ENCODE measurements at regions of chr11 and their contacts with region 1.

Region 1: DNA sequence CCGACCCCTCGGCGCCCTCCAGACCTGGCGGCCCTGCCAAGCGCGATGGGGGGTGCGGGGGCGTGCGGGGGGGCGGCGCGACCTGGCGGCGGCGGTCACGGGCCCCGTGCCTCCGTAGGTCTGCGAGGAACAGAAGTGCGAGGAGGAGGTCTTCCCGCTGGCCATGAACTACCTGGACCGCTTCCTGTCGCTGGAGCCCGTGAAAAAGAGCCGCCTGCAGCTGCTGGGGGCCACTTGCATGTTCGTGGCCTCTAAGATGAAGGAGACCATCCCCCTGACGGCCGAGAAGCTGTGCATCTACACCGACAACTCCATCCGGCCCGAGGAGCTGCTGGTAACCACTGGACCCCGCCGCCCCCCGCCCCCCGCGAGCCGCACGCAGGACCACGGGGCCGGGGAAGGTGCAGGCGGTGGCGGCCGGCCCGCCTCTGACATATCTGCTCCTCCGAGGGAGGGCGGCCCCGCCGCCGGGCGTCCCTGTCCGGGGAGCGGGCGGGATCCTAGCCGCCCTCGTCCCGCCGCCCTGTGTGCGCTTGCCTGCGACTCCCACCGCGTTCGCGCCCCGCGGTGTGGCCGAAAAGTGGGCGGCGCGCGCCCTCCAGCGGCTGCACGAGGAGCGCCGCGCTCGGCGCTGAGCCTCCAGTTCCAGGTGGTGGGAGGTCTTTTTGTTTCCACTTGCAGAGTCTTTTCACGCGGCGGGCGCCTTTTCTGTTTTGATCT is 2.1 kb downstream of the CCND1 start:
- DNase-seq: peak in 9 of 10 donors; percentile 40 to 86 (median 68)
- H3K4me3 ChIP-seq: peak overlapping the region; percentile 31 to 79 (median 66)
- H3K27ac ChIP-seq: peak overlapping the region in 35 of 59 donors; percentile 3 to 82 (median 63)
- H3K27me3 ChIP-seq: peaks cover 2 to 80% (median 49%) of the 10 kb centered on the region in 45 donors
- CTCF ChIP-seq: peak; percentile 54 to 99 (median 95)

Region 2: DNA sequence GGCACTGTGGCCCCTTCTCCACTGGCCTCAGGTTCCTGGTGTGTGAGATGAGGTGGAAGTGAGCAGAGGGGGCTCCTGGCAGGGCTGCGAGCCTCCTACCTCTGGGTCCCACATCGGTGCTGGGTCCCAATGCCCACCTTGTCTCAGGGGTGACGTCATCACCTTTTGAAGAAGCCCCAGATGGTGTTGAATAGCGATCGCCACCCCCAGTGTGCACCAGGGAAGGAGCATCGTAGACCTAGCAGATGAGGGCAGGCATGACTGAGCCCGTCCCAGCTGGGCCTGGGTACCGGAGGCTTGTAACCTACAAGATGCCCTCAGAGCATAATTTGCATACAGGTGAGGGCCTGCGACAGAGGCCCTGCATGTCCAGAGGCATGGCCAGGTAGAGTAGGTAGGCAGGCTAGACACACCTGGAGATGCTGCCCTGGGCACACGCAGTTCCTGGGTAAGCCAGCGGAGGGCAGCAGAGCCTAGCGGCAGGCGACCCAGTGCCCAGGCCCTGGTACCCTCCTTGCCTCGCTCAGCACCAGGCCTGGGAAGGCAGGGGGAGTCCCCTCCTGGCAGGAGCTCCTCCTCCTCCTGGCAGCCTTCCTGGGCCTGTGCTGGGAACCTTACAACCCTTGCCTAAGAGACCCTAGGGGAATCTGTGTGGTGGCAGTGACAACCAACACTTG is 541.8 kb before region 1 on chr11:
- intact Hi-C with region 1: loop called (anchors 1 kb)
- DNase-seq: peak; percentile 54 to 80 (median 64)
- H3K4me3 ChIP-seq: no peak overlapping the region
- H3K27ac ChIP-seq: no peak overlapping the region
- H3K27me3 ChIP-seq: peaks cover 0 to 21% (median 0%) of the 10 kb centered on the region in 45 donors
- CTCF ChIP-seq: peak; percentile 92 to 100 (median 99)

Region 3: DNA sequence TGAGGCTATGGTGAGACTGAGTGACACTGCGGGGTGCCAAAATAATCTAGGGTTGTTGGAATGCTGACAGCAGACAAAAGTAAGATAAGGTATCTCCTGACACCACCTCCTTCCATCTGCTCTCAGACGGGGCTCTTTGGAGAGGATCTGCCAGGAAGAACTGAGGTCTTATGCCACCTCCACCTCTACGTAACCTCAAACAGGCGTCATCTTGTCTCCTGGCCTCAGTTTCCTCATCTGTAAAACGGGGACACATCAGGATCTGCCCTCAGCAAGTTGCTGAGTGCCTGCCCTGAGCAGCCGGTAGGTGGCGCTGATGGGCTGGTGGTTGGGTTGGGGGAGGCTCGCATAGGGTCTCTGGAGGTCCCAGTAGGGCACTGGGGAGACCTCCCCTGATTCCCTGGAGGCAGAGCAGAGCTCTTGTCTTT is 350.8 kb before region 1 on chr11:
- intact Hi-C with region 1: loop called (anchors 2 to 5 kb)
- DNase-seq: no peak
- H3K4me3 ChIP-seq: no peak overlapping the region
- H3K27ac ChIP-seq: no peak overlapping the region
- H3K27me3 ChIP-seq: peaks cover 0 to 41% (median 6%) of the 10 kb centered on the region in 45 donors
- CTCF ChIP-seq: peak in 54 of 56 donors; percentile 12 to 70 (median 53)

Region 4: GRCh38 chr11:69443138-69443967 is 199.7 kb before region 1 on chr11:
- intact Hi-C with region 1: loop called (anchors 10 kb)
- DNase-seq: peak; percentile 71 to 93 (median 88)
- H3K4me3 ChIP-seq: peak overlapping the region; percentile 40 to 74 (median 61)
- H3K27ac ChIP-seq: peak overlapping the region in 55 of 59 donors; percentile 1 to 90 (median 74)
- H3K27me3 ChIP-seq: no peaks in the 10 kb centered on the region
- CTCF ChIP-seq: peak in 15 of 56 donors; percentile 8 to 40 (median 20)

Region 5: DNA sequence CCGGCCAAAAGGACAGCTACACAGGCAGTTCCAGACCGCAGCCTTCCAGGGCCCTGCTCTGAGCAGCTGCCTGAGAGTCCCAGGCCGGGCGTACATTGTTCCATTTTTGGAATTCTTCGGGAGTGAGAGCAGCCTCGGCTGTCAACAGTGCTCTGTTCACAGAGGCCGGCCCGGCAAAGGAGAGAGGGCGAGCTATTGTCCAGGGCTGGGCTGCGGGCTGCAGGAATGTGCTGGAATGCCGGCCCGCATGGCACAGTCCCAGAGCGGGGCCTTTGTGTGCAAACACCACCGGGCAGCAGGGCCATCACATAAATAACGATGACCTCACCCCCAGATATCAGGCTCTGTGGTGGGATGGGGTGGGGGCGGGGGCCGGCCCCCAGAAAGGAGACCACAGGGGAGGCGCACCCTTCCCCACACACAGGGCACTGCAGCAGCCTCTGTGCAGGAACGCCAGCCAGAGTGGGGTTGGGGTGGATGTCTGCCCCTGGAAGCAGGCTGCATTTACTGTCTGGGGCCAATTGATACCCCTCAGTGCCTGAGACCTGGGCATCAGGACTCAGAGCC is 145.8 kb before region 1 on chr11:
- intact Hi-C with region 1: no loop called
- DNase-seq: peak in 9 of 10 donors; percentile 27 to 77 (median 53)
- H3K4me3 ChIP-seq: peak overlapping the region in 1 of 59 donors; percentile 11
- H3K27ac ChIP-seq: peak overlapping the region in 28 of 59 donors; percentile 11 to 86 (median 51)
- H3K27me3 ChIP-seq: no peaks in the 10 kb centered on the region
- CTCF ChIP-seq: no peak

Region 6: DNA sequence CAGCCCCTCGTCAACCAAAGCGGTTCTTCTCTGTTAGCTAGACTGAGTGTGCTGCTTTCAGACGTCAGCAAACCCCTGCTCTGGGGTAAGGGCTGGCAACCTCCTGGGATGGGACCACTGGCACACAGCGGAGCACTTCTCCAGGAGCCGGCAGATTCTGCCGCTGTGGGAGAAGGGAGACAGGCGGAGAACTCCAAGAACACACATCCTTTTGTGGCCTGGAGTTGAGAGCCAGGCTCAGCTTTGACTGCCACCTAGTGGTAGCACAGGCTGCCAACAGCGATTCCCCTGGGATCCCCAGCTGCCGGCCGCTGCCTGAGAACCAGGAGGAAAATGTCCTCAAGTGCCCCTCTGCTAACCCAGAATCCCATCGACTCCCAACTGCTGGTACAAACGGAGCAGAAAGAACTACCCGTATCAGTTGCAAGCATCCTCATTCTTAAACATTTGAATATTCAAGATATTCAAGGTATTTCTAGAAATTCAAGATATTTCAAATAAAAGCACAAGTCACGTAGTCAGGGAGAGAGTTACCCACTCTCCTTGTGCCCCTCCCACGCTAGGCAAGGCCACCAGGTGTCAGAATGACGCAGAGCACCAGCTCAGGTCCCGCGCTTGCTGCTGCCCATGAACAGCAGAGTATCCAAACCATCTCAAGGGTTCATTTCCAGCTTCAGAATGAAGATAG is 27.2 kb after region 1 on chr11:
- intact Hi-C with region 1: loop called in 1 of 2 experiments (anchors 2 kb)
- DNase-seq: peak; percentile 55 to 92 (median 89)
- H3K4me3 ChIP-seq: peak overlapping the region in 31 of 59 donors; percentile 1 to 47 (median 28)
- H3K27ac ChIP-seq: peak overlapping the region in 33 of 59 donors; percentile 0 to 81 (median 47)
- H3K27me3 ChIP-seq: no peaks in the 10 kb centered on the region
- CTCF ChIP-seq: peak; percentile 81 to 98 (median 95)